Right lobe of liver (tissue), 6 donors: ENCODE measurements at regions of chr15 and their contacts with region 1.

Region 1: GRCh38 chr15:87401973-87402372 is 854.6 kb downstream of the NTRK3 start:
- DNase-seq: no peak
- ATAC-seq: no peak
- H3K4me3 ChIP-seq: no peak overlapping the region
- H3K27ac ChIP-seq: no peak overlapping the region
- H3K4me1 ChIP-seq: no peaks in the 10 kb centered on the region
- H3K27me3 ChIP-seq: no peaks in the 10 kb centered on the region
- CTCF ChIP-seq: no peak
- POLR2A ChIP-seq: no peak

Region 2: DNA sequence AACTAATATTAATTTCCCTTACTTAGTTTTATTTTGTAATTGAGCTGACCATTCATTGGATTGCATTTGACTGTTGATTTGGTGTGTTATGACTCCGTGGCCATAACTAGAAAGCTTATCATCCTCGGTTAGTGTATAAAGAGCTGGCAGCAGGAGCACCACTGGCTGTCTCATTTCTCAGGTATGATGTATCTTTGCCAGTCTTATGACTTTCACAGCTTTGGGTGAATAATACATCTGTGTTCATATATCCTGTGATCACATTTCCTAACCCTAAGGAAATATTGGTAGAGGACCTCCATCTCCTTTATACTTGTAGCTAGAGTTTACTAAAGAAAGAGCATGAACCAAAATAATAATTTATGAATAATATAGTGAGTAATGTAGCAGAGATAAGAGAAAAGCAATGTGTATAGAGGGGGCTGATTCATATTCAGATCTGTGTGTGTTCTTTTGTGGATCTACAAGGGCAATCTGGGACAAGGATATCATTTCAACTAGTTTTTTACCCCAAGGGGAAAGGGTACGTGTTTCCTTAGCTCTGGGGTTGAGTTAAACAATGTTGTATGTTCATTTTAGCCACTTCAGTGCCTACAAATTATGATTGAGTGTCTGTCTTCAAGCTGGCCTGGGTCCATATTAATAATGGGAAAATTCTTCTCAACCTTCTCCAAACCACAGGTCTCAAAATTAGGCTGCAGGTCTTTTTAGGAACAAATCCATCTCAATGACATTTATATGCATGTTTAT is 47.1 kb before region 1 on chr15:
- intact Hi-C with region 1: loop called in 1 of 2 experiments (anchors 10 kb)
- DNase-seq: no peak
- ATAC-seq: no peak
- H3K4me3 ChIP-seq: no peak overlapping the region
- H3K27ac ChIP-seq: no peak overlapping the region
- H3K4me1 ChIP-seq: no peaks in the 10 kb centered on the region
- H3K27me3 ChIP-seq: no peaks in the 10 kb centered on the region
- CTCF ChIP-seq: no peak
- POLR2A ChIP-seq: no peak

Region 3: DNA sequence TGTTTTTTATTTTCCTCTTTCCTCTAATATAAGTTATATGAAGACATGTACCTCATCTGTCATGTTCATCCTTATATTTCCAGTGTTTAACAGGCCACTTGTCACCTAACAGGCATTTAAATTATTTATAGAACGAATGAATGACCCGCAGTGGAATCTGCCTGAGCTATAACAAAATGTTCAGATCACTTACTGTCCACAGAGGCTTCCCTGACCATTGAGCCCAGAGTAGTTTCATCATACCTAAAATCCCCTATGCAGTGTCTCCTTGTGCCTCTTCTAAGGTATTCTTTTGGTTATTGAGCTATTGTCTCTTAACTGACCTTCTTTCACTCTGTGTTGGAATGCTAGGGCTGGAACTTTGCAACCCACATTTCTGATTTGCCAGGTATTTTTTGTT is 106.1 kb after region 1 on chr15:
- intact Hi-C with region 1: no loop called
- DNase-seq: no peak
- ATAC-seq: no peak
- H3K4me3 ChIP-seq: no peak overlapping the region
- H3K27ac ChIP-seq: no peak overlapping the region
- H3K4me1 ChIP-seq: no peaks in the 10 kb centered on the region
- H3K27me3 ChIP-seq: no peaks in the 10 kb centered on the region
- CTCF ChIP-seq: no peak
- POLR2A ChIP-seq: no peak